ENCODE measurements at regions of chr17 and their contacts with region 1.

Region 1: DNA sequence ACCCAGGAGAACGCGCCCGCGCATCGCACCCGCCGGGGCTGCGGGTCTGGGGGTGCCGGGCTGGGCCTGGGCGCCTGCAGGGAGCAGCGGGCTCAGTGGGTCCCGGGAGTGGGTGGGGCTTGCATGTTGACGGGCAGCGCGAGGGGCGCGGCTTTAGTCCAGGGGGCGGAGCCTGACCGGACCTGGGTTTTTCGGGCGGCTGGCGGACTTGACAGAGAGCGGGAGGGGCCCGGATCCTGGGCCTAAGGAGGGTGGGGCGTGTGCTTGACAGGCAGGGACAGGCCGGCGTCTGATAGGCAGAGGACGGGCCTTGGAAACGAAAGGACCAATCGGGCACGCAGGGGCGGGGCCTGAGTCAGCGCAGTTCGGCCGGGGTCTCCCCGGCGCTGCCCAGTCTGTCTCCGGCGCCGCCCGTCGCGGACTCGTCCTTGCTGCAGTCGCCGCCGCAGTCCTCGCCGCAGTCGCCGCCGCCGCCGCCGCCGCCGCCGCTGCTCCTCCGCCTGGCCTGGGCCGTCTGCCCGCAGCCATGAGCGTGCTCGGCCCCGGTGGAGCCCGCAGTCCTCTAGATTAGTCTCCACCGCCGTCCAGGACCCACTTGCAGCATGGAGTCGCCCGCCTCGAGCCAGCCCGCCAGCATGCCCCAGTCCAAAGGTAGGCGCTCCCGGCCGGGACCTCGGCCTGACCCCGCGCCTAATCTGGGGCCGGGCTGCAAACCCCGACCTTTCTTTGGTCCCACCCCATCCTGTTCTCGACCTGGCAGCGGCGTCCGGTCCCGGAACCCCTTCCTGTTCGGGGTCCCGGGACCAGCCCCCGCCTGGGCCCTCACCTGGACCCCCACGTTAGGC is at the start of gene MAP2K3:
- DNase-seq: peak; percentile 79 to 98 (median 84)
- ATAC-seq: peak; percentile 78
- H3K4me3 ChIP-seq: peak within 1 kb of the TSS; percentile 90
- H3K4me3 Mint-ChIP-seq: peak within 1 kb of the TSS; percentile 88 to 99 (median 96)
- H3K27ac ChIP-seq: peak within 1 kb of the TSS; percentile 78
- H3K27ac Mint-ChIP-seq: peak within 1 kb of the TSS; percentile 88 to 97 (median 96)
- H3K4me1 ChIP-seq: peaks cover 39 to 40% of the 10 kb centered on the region in 2 donors
- H3K4me1 Mint-ChIP-seq: peaks cover 32 to 57% (median 52%) of the 10 kb centered on the region in 7 donors
- H3K27me3 ChIP-seq: no peaks in the 10 kb centered on the region
- H3K27me3 Mint-ChIP-seq: no peaks in the 10 kb centered on the region
- total RNA-seq, gene MAP2K3: 37.5 to 127 (median 39.2) TPM

Region 2: GRCh38 chr17:21318439-21318838 is 33.9 kb after region 1 on chr17:
- CTCF ChIA-PET with region 1: interaction called, 3 read pairs
- POLR2A ChIA-PET with region 1: no interaction called
- intact Hi-C with region 1: loop called (anchors 2 kb)
- DNase-seq: no peak
- ATAC-seq: no peak
- H3K4me3 ChIP-seq: no peak overlapping the region
- H3K4me3 Mint-ChIP-seq: no peak overlapping the region
- H3K27ac ChIP-seq: no peak overlapping the region
- H3K27ac Mint-ChIP-seq: no peak overlapping the region
- H3K4me1 ChIP-seq: no peaks in the 10 kb centered on the region
- H3K4me1 Mint-ChIP-seq: peaks cover 0 to 7% (median 6%) of the 10 kb centered on the region in 7 donors
- H3K27me3 ChIP-seq: no peaks in the 10 kb centered on the region
- H3K27me3 Mint-ChIP-seq: peaks cover 0 to 5% (median 5%) of the 10 kb centered on the region in 5 donors

Region 3: DNA sequence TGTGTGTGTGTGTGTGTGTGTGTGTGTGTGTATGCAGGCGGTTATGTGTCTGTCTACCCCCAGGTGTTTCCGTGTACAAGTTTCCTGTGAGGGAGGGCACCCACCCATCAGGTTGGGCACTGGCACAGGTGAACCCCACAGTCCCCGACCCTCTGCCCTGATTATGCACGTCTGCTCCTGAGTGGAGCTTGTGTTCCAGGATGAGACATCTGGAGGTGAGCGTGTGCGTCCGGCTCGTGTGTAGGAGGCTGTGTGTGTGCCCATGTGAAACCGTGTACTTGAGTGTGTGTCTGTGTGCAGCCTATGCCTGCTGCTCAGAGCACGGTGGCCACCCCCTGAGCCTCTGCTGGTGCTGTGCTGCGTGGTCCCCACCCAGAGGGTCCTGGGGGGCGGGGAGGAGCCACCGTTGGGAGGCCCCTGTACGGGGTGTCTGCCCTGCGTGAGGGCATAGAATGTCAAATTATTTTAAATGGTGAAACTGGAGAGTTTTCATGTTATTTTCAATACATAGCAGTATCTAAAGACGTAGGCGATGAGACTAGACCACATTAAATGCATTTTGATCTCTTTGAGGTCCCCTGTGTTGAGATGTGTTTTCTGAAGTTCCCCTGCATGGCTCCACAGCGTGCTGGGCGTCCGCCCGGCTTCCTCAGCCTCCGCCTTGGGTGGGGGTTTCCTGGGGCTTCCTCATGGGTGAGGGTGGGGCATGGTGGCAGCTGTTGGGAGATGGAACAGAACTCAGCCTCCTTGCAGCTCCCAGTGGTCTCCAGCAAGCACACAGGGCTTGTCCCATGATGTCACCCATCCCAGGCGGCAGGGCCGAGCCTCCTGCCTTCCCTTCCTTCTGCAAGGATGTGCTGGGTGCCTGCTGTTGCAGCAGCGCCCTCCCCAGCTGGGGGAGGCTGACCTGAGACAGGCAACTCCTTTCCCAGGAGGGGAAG is 135.0 kb after region 1 on chr17:
- CTCF ChIA-PET with region 1: no interaction called
- POLR2A ChIA-PET with region 1: no interaction called
- intact Hi-C with region 1: loop called in 1 of 2 experiments (anchors 2 kb)
- DNase-seq: peak in 8 of 9 donors; percentile 29 to 90 (median 85)
- ATAC-seq: peak; percentile 88
- H3K4me3 ChIP-seq: peak overlapping the region; percentile 49
- H3K4me3 Mint-ChIP-seq: peak overlapping the region in 9 of 10 donors; percentile 85 to 96 (median 90)
- H3K27ac ChIP-seq: peak overlapping the region; percentile 83
- H3K27ac Mint-ChIP-seq: peak overlapping the region in 8 of 9 donors; percentile 86 to 100 (median 99)
- H3K4me1 ChIP-seq: peaks cover 0 to 28% of the 10 kb centered on the region in 2 donors
- H3K4me1 Mint-ChIP-seq: peaks cover 4 to 44% (median 26%) of the 10 kb centered on the region in 7 donors
- H3K27me3 ChIP-seq: no peaks in the 10 kb centered on the region
- H3K27me3 Mint-ChIP-seq: peaks cover 0 to 2% (median 0%) of the 10 kb centered on the region in 5 donors

Region 4: GRCh38 chr17:21551081-21551881 is 266.7 kb after region 1 on chr17:
- CTCF ChIA-PET with region 1: no interaction called
- POLR2A ChIA-PET with region 1: no interaction called
- intact Hi-C with region 1: loop called (anchors 1 kb)
- DNase-seq: peak; percentile 68 to 89 (median 80)
- ATAC-seq: peak; percentile 96
- H3K4me3 ChIP-seq: peak overlapping the region; percentile 69
- H3K4me3 Mint-ChIP-seq: peak overlapping the region; percentile 78 to 91 (median 88)
- H3K27ac ChIP-seq: peak overlapping the region; percentile 69
- H3K27ac Mint-ChIP-seq: peak overlapping the region in 6 of 9 donors; percentile 16 to 66 (median 46)
- H3K4me1 ChIP-seq: peaks cover 0 to 10% of the 10 kb centered on the region in 2 donors
- H3K4me1 Mint-ChIP-seq: peaks cover 24 to 53% (median 41%) of the 10 kb centered on the region in 7 donors
- H3K27me3 ChIP-seq: no peaks in the 10 kb centered on the region
- H3K27me3 Mint-ChIP-seq: peaks cover 17 to 31% (median 27%) of the 10 kb centered on the region in 5 donors

Measured in naive thymus-derived CD4-positive, alpha-beta T cell (primary cell).